Mammary epithelial cell (primary cell): ENCODE measurements at regions of chr4 and their contacts with region 1.

Region 1: DNA sequence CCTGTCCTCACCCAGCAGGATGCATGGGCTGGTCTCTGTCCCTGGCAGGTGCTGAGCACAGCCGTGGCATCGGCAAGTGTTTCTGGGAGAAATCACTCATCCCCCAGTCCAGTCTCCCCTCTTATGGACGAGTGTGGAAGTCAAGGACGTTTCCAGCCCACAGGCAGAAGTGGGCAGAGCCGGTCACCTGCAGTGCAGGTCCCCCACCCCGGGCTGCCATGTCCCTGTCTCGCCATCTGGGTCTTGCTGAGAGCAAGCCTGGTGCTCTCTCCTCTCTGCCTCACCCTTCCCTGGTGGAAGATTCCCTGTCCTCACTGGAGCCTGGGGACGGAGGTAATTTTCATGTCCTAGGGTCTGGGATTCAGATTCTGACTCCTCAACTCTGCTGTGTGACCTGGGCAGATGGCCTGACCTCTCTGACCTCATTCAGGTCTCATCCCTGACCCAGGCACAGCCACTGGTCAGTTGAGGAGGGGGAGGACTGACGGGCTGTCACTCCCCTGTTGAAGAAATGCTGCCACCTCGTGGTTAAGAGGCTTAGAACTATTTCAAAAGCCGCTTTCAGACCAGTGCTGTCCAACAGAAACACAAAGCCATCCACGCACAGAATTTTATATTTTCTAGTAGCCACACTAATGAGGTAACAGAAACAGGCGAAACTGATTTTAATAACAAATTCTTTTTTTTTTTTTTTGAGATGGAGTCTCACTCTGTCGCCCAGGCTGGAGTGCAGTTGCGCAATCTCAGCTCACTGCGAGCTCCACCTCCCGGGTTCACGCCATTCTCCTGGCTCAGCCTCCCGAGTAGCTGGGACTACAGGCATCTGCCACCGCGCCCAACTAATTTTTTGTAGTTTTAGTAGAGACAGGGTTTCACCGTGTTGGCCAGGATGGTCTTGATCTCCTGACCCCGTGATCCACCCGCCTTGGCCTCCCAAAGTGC is 1.8 kb downstream of the CPZ start:
- DNase-seq: peak; percentile 49
- H3K4me3 ChIP-seq: no peak overlapping the region
- H3K27ac ChIP-seq: no peak overlapping the region
- H3K4me1 ChIP-seq: no peaks in the 10 kb centered on the region
- H3K27me3 ChIP-seq: peaks cover 14% of the 10 kb centered on the region
- CTCF ChIP-seq: peak; percentile 55 to 80

Region 2: GRCh38 chr4:8241895-8242696 is 352.3 kb before region 1 on chr4:
- CTCF ChIA-PET with region 1: no interaction called
- dilution Hi-C with region 1: no loop called
- in situ Hi-C with region 1: no loop called
- intact Hi-C with region 1: loop called (anchors 2 kb)
- DNase-seq: peak; percentile 39
- H3K4me3 ChIP-seq: no peak overlapping the region
- H3K27ac ChIP-seq: no peak overlapping the region
- H3K4me1 ChIP-seq: peaks cover 4% of the 10 kb centered on the region
- H3K27me3 ChIP-seq: no peaks in the 10 kb centered on the region
- CTCF ChIP-seq: peak; percentile 75 to 95

Region 3: GRCh38 chr4:8255698-8256441 is 338.5 kb before region 1 on chr4:
- CTCF ChIA-PET with region 1: no interaction called
- dilution Hi-C with region 1: no loop called
- in situ Hi-C with region 1: no loop called
- intact Hi-C with region 1: loop called (anchors 5 kb)
- DNase-seq: no peak
- H3K4me3 ChIP-seq: no peak overlapping the region
- H3K27ac ChIP-seq: no peak overlapping the region
- H3K4me1 ChIP-seq: peaks cover 9% of the 10 kb centered on the region
- H3K27me3 ChIP-seq: no peaks in the 10 kb centered on the region
- CTCF ChIP-seq: no peak

Region 4: DNA sequence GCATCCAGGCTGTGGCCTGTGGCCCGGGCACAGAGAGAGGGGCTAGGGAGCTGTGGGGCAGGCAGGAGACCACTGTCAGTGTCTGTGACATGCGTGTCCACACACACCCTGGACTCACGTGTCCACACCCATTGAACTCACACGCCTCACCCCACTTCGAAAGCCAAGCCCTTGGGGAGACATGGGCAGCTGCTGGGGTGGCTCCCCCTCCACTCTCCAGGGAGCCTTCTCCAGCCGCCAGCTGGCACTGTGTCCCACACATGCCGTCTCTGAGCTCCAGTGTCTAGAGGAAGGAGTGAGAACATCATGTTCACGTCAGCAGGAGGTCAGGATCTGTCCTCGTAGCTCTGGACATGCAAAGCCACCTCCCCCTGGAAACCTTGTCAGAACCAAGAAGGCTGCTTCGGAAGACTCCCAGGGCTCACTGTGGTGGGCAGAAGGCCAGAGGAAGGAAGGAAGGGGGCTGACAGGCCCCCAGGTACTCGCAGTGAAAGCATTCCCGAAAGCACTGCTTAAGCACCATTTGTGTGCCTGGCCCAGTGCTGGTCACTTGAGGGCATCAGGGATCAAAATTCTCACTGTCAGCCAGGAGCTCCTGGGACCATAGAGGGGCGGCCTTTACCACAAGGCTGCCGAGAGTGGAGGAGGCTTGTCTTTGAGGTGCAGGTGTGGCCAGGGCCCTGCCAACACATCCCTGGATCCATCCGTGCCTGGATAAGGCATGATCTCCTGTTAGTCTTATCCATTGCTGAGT is 263.4 kb before region 1 on chr4:
- CTCF ChIA-PET with region 1: no interaction called
- dilution Hi-C with region 1: no loop called
- in situ Hi-C with region 1: no loop called
- intact Hi-C with region 1: no loop called
- DNase-seq: no peak
- H3K4me3 ChIP-seq: no peak overlapping the region
- H3K27ac ChIP-seq: no peak overlapping the region
- H3K4me1 ChIP-seq: peaks cover 17% of the 10 kb centered on the region
- H3K27me3 ChIP-seq: no peaks in the 10 kb centered on the region
- CTCF ChIP-seq: no peak

Region 5: GRCh38 chr4:8468746-8469535 is 125.4 kb before region 1 on chr4:
- CTCF ChIA-PET with region 1: interaction called, 3 read pairs
- dilution Hi-C with region 1: no loop called
- in situ Hi-C with region 1: loop called (anchors 5 to 10 kb)
- intact Hi-C with region 1: loop called (anchors 1 kb)
- DNase-seq: peak; percentile 39
- H3K4me3 ChIP-seq: no peak overlapping the region
- H3K27ac ChIP-seq: no peak overlapping the region
- H3K4me1 ChIP-seq: no peaks in the 10 kb centered on the region
- H3K27me3 ChIP-seq: no peaks in the 10 kb centered on the region
- CTCF ChIP-seq: peak; percentile 95 to 98

Region 6: DNA sequence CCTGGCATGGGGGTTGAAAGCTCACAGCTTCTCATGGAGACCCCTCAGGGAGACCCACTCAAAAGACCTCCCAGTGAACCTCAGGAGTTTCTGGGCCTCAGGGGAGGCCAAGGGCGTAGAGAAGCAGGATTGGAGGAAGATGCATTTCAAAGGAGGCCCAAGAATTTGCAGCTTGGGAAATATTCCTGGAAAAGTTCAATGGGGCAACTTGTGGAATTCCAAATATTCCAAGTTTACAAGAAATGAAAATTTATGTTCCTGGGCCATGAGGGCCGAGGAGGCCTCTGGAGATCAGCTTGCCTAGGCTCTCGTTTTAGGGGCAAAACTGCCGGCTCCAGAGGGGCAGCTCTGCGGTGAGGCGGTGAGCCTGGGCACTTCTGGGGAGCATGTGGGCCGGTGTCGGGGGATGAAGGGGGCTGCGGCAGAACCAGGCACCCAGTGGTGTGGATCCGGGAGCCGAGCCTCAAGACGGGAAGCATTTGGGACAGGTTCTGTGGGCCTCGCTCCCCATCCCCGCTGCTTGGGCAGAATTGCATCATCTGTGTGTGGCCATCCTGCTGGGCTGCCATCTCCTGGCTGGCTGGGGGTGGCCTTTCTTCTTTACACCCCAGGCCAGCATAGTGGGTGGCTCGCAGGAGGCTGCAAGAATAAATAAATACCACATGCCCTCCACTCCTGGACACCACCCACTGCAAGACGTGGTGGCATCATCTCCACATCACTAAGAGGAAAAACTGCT is 68.8 kb before region 1 on chr4:
- CTCF ChIA-PET with region 1: no interaction called
- dilution Hi-C with region 1: no loop called
- in situ Hi-C with region 1: no loop called
- intact Hi-C with region 1: no loop called
- DNase-seq: no peak
- H3K4me3 ChIP-seq: no peak overlapping the region
- H3K27ac ChIP-seq: no peak overlapping the region
- H3K4me1 ChIP-seq: no peaks in the 10 kb centered on the region
- H3K27me3 ChIP-seq: no peaks in the 10 kb centered on the region
- CTCF ChIP-seq: no peak

Region 7: DNA sequence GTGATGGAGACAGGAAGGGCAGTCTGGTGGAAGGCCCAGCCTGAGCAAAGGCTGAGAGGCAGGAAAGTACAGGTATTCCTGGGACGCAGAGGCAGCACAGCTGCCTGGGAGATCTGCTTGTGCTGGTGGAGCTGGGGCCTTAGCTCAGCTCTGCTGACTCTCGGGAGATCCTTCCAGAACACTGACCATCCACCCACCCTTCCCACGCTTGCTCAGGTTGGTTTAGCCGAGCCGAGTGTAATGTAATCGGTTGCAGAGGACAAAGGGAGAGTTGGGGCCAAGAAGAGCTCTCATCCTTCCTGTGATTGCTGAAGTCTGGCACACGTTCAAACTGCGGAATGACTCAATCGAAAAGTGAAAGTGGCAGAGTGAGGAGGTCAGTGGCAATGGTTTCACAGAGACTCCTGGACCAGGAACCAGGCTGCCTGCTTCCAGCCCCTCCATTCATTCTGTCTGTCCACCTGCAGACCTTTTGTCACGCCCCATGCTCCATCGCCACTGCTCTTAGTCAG is 57.3 kb before region 1 on chr4:
- CTCF ChIA-PET with region 1: interaction called, 3 read pairs
- dilution Hi-C with region 1: no loop called
- in situ Hi-C with region 1: no loop called
- intact Hi-C with region 1: loop called (anchors 5 kb)
- DNase-seq: peak; percentile 97
- H3K4me3 ChIP-seq: no peak overlapping the region
- H3K27ac ChIP-seq: no peak overlapping the region
- H3K4me1 ChIP-seq: peaks cover 47% of the 10 kb centered on the region
- H3K27me3 ChIP-seq: no peaks in the 10 kb centered on the region
- CTCF ChIP-seq: no peak

Region 8: DNA sequence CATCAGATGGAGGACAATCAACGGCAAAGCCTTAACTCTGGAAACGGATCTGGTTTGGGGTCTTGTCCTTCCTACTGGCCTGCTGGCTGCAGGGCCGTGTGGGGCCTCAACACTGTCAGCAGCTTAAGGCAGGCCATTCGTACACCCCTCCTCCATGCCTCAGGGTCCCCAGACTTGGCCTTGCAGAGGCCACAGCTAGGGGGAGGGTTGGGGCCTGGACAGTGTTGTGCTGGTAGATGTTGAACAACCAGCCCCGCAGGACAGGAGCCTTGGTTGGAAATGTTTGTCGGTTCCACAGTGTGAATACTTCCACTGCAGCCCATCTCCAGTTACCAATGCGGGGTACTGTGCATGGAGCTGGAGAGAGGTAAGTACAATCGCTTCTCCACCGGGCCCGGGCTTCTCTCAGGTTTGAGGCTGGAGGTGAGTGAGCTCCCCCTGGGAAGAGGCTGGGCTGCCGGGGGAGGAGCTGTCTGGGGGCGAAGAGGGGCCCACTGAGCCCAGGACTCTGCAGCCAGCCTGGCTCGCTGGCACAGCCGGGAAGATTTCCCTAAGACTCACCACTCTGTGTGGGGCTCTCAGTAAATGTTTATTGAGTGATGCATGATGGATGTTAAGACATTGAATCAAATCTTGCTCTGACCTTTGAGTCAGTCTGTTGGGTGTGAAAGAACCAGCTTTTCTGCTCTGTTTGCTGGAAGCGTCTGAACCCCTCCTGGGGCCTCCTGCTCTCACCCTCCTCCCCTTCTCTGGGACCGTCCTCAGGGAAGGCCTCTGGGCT is 33.9 kb before region 1 on chr4:
- CTCF ChIA-PET with region 1: no interaction called
- dilution Hi-C with region 1: no loop called
- in situ Hi-C with region 1: no loop called
- intact Hi-C with region 1: no loop called
- DNase-seq: no peak
- H3K4me3 ChIP-seq: no peak overlapping the region
- H3K27ac ChIP-seq: no peak overlapping the region
- H3K4me1 ChIP-seq: no peaks in the 10 kb centered on the region
- H3K27me3 ChIP-seq: no peaks in the 10 kb centered on the region
- CTCF ChIP-seq: no peak

Region 9: GRCh38 chr4:8675383-8675782 is 81.0 kb after region 1 on chr4:
- CTCF ChIA-PET with region 1: no interaction called
- dilution Hi-C with region 1: loop called (anchors 5 kb)
- in situ Hi-C with region 1: no loop called
- intact Hi-C with region 1: no loop called
- DNase-seq: no peak
- H3K4me3 ChIP-seq: no peak overlapping the region
- H3K27ac ChIP-seq: no peak overlapping the region
- H3K4me1 ChIP-seq: no peaks in the 10 kb centered on the region
- H3K27me3 ChIP-seq: no peaks in the 10 kb centered on the region
- CTCF ChIP-seq: no peak

Region 10: GRCh38 chr4:8705161-8706145 is 111.1 kb after region 1 on chr4:
- CTCF ChIA-PET with region 1: no interaction called
- dilution Hi-C with region 1: no loop called
- in situ Hi-C with region 1: no loop called
- intact Hi-C with region 1: no loop called
- DNase-seq: no peak
- H3K4me3 ChIP-seq: no peak overlapping the region
- H3K27ac ChIP-seq: no peak overlapping the region
- H3K4me1 ChIP-seq: no peaks in the 10 kb centered on the region
- H3K27me3 ChIP-seq: no peaks in the 10 kb centered on the region
- CTCF ChIP-seq: no peak